PC-9 (cell line): ENCODE measurements at regions of chr22 and their contacts with region 1.

Region 1: GRCh38 chr22:42947211-42947990 is 67.5 kb downstream of the PACSIN2 start:
- DNase-seq: peak; percentile 87 to 94
- H3K4me3 ChIP-seq: peak overlapping the region; percentile 13; the same call in 1 of the 2 replicates
- H3K27ac ChIP-seq: peak overlapping the region; percentile 91
- H3K4me1 ChIP-seq: peaks cover 59% of the 10 kb centered on the region
- H3K27me3 ChIP-seq: no peaks in the 10 kb centered on the region
- CTCF ChIP-seq: no peak

Region 2: DNA sequence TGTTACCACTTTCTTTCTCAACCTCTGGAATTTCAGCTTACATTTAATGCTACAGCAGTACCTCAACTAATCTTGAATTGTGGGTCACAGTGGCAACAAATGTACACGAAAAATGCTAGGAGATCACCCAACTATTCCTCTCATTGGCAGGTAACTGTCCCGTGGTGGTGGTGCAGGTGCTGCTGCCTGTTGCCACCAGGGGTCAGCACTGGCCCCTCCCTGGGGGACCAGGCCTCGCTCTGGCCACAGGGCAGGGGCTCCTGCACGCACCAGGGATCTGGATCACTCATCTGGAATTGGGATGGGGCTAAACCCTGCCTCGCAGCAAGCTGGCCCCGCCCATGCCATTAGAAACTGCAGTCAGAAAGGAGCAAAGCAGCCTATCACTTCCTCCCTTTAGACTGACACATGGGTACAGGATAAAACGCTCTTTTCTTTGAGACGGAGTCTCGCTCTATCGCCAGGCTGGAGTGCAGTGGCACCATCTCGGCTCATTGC is 325.8 kb before region 1 on chr22:
- CTCF ChIA-PET with region 1: no interaction called
- POLR2A ChIA-PET with region 1: interaction called, 17 read pairs
- intact Hi-C with region 1: no loop called
- DNase-seq: peak in 1 of 2 experiments; percentile 70
- H3K4me3 ChIP-seq: no peak overlapping the region
- H3K27ac ChIP-seq: no peak overlapping the region
- H3K4me1 ChIP-seq: peaks cover 4% of the 10 kb centered on the region; the same call in 1 of the 2 replicates
- H3K27me3 ChIP-seq: no peaks in the 10 kb centered on the region
- CTCF ChIP-seq: peak; percentile 92

Region 3: GRCh38 chr22:42919199-42919598 is 28.2 kb before region 1 on chr22:
- CTCF ChIA-PET with region 1: no interaction called
- POLR2A ChIA-PET with region 1: no interaction called
- intact Hi-C with region 1: loop called (anchors 1 kb)
- DNase-seq: peak; percentile 38 to 75
- H3K4me3 ChIP-seq: no peak overlapping the region
- H3K27ac ChIP-seq: peak overlapping the region; percentile 37
- H3K4me1 ChIP-seq: peaks cover 46% of the 10 kb centered on the region
- H3K27me3 ChIP-seq: no peaks in the 10 kb centered on the region
- CTCF ChIP-seq: no peak

Region 4: GRCh38 chr22:42964994-42965699 is 17.7 kb after region 1 on chr22:
- CTCF ChIA-PET with region 1: interaction called, 3 read pairs
- POLR2A ChIA-PET with region 1: interaction called, 3 read pairs
- intact Hi-C with region 1: loop called (anchors 2 kb)
- DNase-seq: peak; percentile 42 to 90
- H3K4me3 ChIP-seq: no peak overlapping the region
- H3K27ac ChIP-seq: peak overlapping the region; percentile 30
- H3K4me1 ChIP-seq: peaks cover 77% of the 10 kb centered on the region
- H3K27me3 ChIP-seq: no peaks in the 10 kb centered on the region
- CTCF ChIP-seq: no peak

Region 5: GRCh38 chr22:42978453-42979103 is 31.2 kb after region 1 on chr22:
- CTCF ChIA-PET with region 1: interaction called, 10 read pairs
- POLR2A ChIA-PET with region 1: no interaction called
- intact Hi-C with region 1: no loop called
- DNase-seq: peak; percentile 75 to 98
- H3K4me3 ChIP-seq: 0 out of 2 replicates have a peak overlapping the region, but pooled peaks have one; percentile 9
- H3K27ac ChIP-seq: peak overlapping the region; percentile 80
- H3K4me1 ChIP-seq: peaks cover 46% of the 10 kb centered on the region
- H3K27me3 ChIP-seq: no peaks in the 10 kb centered on the region
- CTCF ChIP-seq: no peak

Region 6: DNA sequence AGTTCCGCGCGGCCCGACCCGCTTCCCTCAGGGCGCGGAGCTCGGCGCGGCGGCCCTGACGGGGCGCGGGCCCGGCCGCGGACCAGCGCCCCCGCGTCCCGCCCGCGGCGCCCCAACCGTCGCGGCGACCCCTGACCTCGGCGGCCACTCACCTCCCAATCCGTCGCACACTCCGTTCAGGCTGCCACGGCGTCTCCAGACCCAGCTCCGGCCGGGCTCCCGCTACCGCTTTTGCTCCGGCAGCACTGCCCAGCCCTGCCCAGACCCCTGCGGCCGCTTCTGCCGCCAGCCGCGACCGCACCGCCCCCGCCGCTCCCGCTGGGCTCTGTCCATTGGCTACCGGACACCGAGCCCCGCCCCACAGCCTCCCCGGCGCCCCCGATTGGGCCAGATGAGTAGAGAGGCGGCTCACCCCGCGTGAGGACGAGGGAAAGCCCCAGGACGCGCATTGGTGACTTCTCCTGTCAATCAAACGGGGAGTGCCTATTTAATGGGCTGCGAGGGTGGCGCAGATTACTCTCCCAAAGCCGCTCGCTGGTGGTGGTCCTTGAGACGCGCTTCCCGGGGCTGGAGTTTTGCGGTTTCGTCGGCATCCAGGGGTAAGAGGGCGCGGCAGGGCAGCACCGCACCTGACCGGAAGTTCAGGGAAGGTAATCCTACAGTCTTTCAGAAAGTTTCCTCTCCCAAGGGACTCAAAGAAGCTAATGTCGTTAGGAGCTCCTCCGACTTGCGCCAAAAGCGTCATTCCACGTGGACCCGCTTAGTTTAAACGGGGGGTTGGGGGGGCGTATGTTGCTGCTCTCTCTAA is 67.7 kb after region 1 on chr22 and contains the start of gene PACSIN2:
- CTCF ChIA-PET with region 1: no interaction called
- POLR2A ChIA-PET with region 1: interaction called, 17 read pairs
- intact Hi-C with region 1: loop called (anchors 5 kb)
- DNase-seq: peak; percentile 97 to 99
- H3K4me3 ChIP-seq: peak within 1 kb of the TSS; percentile 66
- H3K27ac ChIP-seq: peak within 1 kb of the TSS; percentile 45
- H3K4me1 ChIP-seq: peaks cover 50% of the 10 kb centered on the region
- H3K27me3 ChIP-seq: no peaks in the 10 kb centered on the region
- CTCF ChIP-seq: no peak
- total RNA-seq, gene PACSIN2: 102 and 103 TPM in 2 replicates

Region 7: DNA sequence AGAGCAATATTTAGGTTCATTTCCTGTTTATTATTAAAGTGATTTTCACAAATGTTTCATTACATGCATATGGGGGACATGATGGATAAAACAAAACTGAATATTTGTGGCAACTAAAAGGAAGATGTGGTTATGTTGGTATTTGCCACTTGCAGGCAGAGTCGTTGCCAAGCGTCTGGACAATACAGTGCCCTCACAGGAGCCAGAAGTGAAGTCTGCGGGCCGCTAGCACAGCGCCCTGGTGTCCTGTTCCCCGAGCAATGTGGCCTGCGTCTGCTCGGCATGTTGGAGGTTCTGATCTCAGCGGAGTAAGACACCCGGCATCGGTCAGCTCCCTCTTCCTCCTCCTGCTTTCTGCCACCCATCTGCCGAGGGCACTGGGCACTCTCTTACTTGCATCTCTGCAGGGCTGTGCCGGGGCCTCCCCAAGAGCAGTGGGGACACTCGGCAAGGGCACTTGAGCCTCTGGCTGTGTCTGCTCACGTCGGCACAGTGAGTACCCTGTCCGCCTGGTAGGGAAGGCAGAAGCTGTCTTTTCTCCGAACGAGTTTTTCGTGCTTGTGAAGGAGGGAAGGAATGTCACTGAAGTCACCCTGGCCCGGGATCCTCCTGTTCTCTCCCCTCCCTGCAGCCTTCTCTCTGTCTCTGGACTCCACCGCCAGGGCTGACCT is 250.0 kb after region 1 on chr22:
- CTCF ChIA-PET with region 1: no interaction called
- POLR2A ChIA-PET with region 1: no interaction called
- intact Hi-C with region 1: no loop called
- DNase-seq: no peak
- H3K4me3 ChIP-seq: no peak overlapping the region
- H3K27ac ChIP-seq: no peak overlapping the region
- H3K4me1 ChIP-seq: 0 out of 2 replicates have a peak, but pooled peaks cover 4% of the 10 kb centered on the region
- H3K27me3 ChIP-seq: peaks cover 9% of the 10 kb centered on the region; the same call in 1 of the 2 replicates
- CTCF ChIP-seq: no peak

Region 8: GRCh38 chr22:43377896-43378704 is 430.7 kb after region 1 on chr22:
- CTCF ChIA-PET with region 1: interaction called, 12 read pairs
- POLR2A ChIA-PET with region 1: no interaction called
- intact Hi-C with region 1: no loop called
- DNase-seq: no peak
- H3K4me3 ChIP-seq: no peak overlapping the region
- H3K27ac ChIP-seq: no peak overlapping the region
- H3K4me1 ChIP-seq: no peaks in the 10 kb centered on the region
- H3K27me3 ChIP-seq: peaks cover 94% of the 10 kb centered on the region
- CTCF ChIP-seq: no peak